Kidney (tissue), 22 donors: ENCODE measurements at regions of chr1 and their contacts with region 1.

Region 1: DNA sequence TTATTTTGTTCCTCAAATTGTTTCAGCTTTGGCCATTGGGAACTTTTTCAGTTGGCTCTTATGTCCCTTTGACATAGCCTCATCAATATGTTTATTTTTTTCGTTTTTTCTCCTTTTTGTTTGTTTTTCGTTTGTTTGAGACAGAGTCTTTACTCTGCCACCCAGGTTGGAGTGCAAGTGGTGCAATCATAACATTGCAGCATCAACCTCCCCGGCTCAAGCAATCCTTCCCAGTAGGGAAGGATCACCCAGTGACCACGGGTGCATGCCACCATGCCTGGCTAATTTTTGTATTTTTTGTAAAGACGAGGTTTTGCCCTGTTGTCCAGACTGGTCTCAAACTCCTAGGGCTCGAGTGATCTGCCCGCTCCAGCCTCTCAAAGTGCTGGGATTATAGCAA is 8.1 kb downstream of the POLR3GL start:
- DNase-seq: no peak
- H3K4me3 ChIP-seq: no peak overlapping the region
- H3K27ac ChIP-seq: no peak overlapping the region
- H3K4me1 ChIP-seq: peaks cover 0 to 4% (median under 1%) of the 10 kb centered on the region in 3 donors
- H3K27me3 ChIP-seq: no peaks in the 10 kb centered on the region
- CTCF ChIP-seq: no peak

Region 2: GRCh38 chr1:145765574-145765973 is 207.0 kb before region 1 on chr1:
- intact Hi-C with region 1: no loop called
- DNase-seq: no peak
- H3K4me3 ChIP-seq: no peak overlapping the region
- H3K27ac ChIP-seq: no peak overlapping the region
- H3K4me1 ChIP-seq: peaks cover 0 to 6% (median 0%) of the 10 kb centered on the region in 3 donors
- H3K27me3 ChIP-seq: no peaks in the 10 kb centered on the region
- CTCF ChIP-seq: no peak

Region 3: GRCh38 chr1:145786271-145786670 is 186.3 kb before region 1 on chr1:
- intact Hi-C with region 1: no loop called
- DNase-seq: no peak
- H3K4me3 ChIP-seq: no peak overlapping the region
- H3K27ac ChIP-seq: no peak overlapping the region
- H3K4me1 ChIP-seq: peaks cover 0 to 4% (median 0%) of the 10 kb centered on the region in 3 donors
- H3K27me3 ChIP-seq: no peaks in the 10 kb centered on the region
- CTCF ChIP-seq: no peak

Region 4: DNA sequence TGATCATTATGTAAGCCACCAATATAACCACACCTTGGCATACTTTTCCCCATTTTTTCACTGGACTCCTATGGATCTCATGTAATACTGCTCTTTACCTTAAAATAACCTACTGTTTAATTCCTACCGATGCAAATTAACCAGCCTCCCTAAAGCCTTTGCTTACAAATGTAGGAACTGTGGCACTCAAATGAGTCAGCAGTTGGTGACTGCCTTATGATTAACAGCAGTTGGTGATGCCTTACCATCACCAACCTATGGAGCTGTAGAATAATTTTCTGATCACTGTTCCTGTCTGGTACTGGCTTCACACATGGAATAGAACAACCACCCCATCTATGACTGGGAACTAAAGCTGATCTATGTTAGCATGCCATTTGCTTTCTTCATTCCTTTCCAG is 134.9 kb before region 1 on chr1:
- intact Hi-C with region 1: no loop called
- DNase-seq: no peak
- H3K4me3 ChIP-seq: no peak overlapping the region
- H3K27ac ChIP-seq: no peak overlapping the region
- H3K4me1 ChIP-seq: no peaks in the 10 kb centered on the region
- H3K27me3 ChIP-seq: no peaks in the 10 kb centered on the region
- CTCF ChIP-seq: no peak

Region 5: DNA sequence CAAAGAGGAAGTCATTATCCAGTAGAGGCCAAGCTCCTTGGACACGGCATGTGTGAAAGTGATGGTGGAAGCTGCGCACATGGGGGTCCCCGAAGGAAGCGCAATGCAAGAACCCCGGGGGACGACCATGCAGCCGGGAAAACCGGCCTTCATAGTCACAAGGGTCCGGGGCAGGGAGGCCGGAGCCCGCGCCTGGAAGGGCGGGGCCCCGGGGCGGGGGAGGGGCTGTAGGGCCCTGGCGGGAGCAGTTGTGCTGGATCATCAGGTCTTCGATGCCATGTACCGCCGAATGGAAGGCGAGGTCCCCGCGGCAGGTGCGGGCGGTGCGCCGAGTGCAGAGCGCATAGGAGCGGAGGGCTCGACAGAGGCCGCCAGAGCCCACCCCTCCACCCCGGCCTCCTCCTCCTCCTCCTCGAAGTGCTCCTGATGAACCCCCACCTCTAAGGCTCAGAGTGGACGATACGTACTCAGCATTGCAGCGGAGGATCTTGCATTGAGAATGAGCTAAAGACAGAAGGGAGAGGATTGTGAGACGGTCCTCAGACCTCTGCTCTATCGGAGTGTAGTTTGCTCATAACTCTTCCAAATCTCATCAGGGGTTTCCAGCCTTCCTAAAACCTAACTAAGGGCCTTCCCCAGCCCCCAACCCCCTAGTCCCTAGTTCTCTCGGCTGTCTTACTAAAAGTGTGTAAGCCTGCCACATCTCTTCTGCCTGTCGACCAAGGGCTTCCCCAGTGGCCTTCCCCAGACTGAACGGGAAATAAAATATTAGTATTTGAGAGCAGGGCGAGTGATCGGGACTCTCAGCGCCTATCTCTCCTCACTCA is 46.9 kb after region 1 on chr1:
- intact Hi-C with region 1: loop called (anchors 5 kb)
- DNase-seq: peak in 3 of 5 donors; percentile 26 to 57 (median 33)
- H3K4me3 ChIP-seq: peak overlapping the region in 2 of 3 donors; percentile 26 to 29
- H3K27ac ChIP-seq: no peak overlapping the region
- H3K4me1 ChIP-seq: no peaks in the 10 kb centered on the region
- H3K27me3 ChIP-seq: peaks cover 20% of the 10 kb centered on the region
- CTCF ChIP-seq: no peak